Common myeloid progenitor, CD34-positive (primary cell): ENCODE measurements at regions of chr20 and their contacts with region 1.

Region 1: GRCh38 chr20:19205977-19206396 is 6.5 kb upstream of the SLC24A3 start:
- DNase-seq: peak; percentile 53 to 73 (median 70)
- H3K4me3 ChIP-seq: no peak overlapping the region
- H3K27ac ChIP-seq: no peak overlapping the region
- H3K4me1 ChIP-seq: no peaks in the 10 kb centered on the region
- H3K27me3 ChIP-seq: peaks cover 0 to 2% (median 0%) of the 10 kb centered on the region in 5 experiments

Region 2: GRCh38 chr20:19218411-19218810 is 12.4 kb after region 1 on chr20:
- CTCF ChIA-PET with region 1: interaction called, 24 read pairs
- POLR2A ChIA-PET with region 1: no interaction called
- DNase-seq: no peak
- H3K4me3 ChIP-seq: no peak overlapping the region
- H3K27ac ChIP-seq: no peak overlapping the region
- H3K4me1 ChIP-seq: peaks cover 0 to 3% (median 2%) of the 10 kb centered on the region in 4 experiments
- H3K27me3 ChIP-seq: peaks cover 0 to 3% (median 0%) of the 10 kb centered on the region in 5 experiments